WTC11 (cell line): ENCODE measurements at regions of chr10 and their contacts with region 1.

Region 1: GRCh38 chr10:119750391-119751230 is 24.8 kb downstream of the INPP5F start:
- DNase-seq: peak; percentile 71
- ATAC-seq: peak; percentile 96
- H3K4me3 Mint-ChIP-seq: no peak overlapping the region
- H3K27ac Mint-ChIP-seq: no peak overlapping the region
- H3K4me1 Mint-ChIP-seq: peaks cover 20% of the 10 kb centered on the region
- H3K27me3 Mint-ChIP-seq: no peaks in the 10 kb centered on the region
- CTCF ChIP-seq: peak; percentile 62

Region 2: GRCh38 chr10:119608316-119609155 is 142.1 kb before region 1 on chr10:
- CTCF ChIA-PET with region 1: interaction called, 16 read pairs
- POLR2A ChIA-PET with region 1: no interaction called
- DNase-seq: peak; percentile 65
- ATAC-seq: peak; percentile 96
- H3K4me3 Mint-ChIP-seq: no peak overlapping the region
- H3K27ac Mint-ChIP-seq: no peak overlapping the region
- H3K4me1 Mint-ChIP-seq: no peaks in the 10 kb centered on the region; the same call in 1 of the 2 replicates
- H3K27me3 Mint-ChIP-seq: peaks cover 4% of the 10 kb centered on the region; the same call in 1 of the 2 replicates
- CTCF ChIP-seq: no peak

Region 3: GRCh38 chr10:119734396-119735332 is 15.9 kb before region 1 on chr10:
- CTCF ChIA-PET with region 1: interaction called, 19 read pairs
- POLR2A ChIA-PET with region 1: interaction called, 3 read pairs
- DNase-seq: no peak
- ATAC-seq: peak; percentile 66
- H3K4me3 Mint-ChIP-seq: no peak overlapping the region
- H3K27ac Mint-ChIP-seq: peak overlapping the region; percentile 74; the same call in 1 of the 2 replicates
- H3K4me1 Mint-ChIP-seq: peaks cover 48% of the 10 kb centered on the region
- H3K27me3 Mint-ChIP-seq: no peaks in the 10 kb centered on the region
- CTCF ChIP-seq: no peak

Region 4: DNA sequence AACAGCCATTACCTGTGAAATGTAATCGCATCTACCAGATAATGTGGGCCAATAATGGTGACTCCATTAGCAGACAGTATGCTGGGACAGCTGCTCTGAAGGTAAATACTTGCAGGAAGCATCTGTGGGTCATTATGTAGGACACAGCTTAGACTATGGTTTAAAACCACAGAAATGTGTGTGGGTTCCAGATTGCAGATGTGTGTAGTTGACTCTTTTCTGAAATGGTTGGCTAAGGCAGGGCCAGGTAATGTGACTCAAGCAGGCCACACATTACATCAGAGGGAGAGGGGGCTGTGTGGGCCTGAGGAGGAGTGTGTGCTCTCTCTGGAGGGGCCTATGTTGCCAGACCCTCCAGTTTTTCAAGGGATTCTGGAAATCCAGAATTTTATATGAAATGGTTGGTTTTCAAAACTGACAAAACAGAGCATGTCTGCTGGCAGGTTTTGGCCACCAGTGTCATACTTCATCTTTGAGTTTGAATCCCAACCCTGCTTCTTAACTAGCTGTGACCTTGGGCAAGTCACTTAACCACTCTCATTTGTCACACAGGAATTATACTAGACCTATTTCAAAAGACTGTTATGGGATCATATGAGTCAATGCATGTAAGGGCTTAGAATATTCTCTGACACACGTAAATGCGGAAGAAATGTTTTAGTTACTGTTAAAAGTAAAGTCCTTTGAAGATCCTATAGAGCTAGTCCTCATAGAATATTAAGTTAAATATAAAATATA is 57.5 kb after region 1 on chr10:
- CTCF ChIA-PET with region 1: interaction called, 14 read pairs
- POLR2A ChIA-PET with region 1: no interaction called
- DNase-seq: no peak
- ATAC-seq: no peak
- H3K4me3 Mint-ChIP-seq: no peak overlapping the region
- H3K27ac Mint-ChIP-seq: no peak overlapping the region
- H3K4me1 Mint-ChIP-seq: no peaks in the 10 kb centered on the region
- H3K27me3 Mint-ChIP-seq: no peaks in the 10 kb centered on the region
- CTCF ChIP-seq: no peak

Region 5: DNA sequence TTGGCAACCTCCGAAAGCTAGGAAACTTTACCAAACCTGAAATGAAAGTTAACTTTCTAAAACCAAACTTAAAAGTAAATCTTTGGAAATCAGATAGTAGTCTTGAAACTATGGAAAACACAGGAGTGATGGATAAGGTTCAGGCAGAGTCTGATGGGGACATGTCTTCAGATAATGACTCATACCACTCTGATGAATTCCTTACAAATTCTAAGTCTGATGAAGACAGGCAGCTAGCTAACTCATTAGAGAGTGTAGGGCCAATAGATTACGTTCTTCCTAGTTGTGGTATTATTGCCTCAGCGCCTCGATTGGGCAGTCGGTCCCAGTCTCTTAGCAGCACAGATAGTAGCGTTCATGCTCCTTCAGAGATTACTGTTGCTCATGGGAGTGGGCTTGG is 76.2 kb after region 1 on chr10:
- CTCF ChIA-PET with region 1: interaction called, 22 read pairs
- POLR2A ChIA-PET with region 1: interaction called, 4 read pairs
- DNase-seq: no peak
- ATAC-seq: no peak
- H3K4me3 Mint-ChIP-seq: no peak overlapping the region
- H3K27ac Mint-ChIP-seq: peak overlapping the region; percentile 47; the same call in 1 of the 2 replicates
- H3K4me1 Mint-ChIP-seq: no peaks in the 10 kb centered on the region
- H3K27me3 Mint-ChIP-seq: no peaks in the 10 kb centered on the region
- CTCF ChIP-seq: no peak

Region 6: DNA sequence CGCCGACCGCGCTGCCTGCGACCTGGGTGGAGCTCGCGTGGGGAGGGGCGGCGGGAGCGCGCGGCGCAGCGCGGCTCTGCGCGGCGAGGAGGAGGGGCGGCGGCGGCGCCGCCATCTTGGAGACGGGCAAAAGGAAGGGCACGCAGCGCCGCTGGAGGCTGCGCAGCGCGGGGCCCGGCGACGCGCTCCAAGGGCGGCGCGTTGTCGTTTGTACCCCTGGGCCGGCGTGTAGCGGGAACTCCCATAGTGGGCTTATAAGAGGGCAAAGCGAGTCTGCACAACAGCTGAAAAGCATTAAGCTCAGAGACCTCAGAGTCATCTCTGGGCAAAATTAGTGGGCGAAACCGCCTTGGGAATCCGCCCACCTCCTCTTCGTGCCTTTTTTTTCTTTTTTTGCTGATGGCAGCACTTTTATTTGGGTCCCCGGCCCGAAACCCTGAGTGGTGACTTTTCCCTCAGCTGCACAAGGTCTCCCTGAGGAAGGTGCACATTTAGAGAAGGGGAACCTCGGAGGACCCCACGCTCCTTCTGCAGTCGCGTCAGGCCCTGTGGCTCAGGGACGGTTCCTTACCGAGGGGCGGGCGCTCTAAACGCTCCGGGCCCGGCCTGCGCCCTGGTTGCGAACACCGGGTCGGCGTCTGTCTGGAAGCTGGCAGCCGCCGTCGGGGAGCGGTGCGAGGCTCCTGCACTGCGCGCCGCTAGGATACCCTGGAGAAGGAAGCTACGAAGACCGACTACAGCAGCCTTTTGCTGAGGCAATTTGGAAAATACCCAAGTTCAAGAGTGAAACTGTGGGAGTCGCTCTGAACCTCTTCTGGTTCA is 122.5 kb after region 1 on chr10:
- CTCF ChIA-PET with region 1: interaction called, 10 read pairs
- POLR2A ChIA-PET with region 1: interaction called, 8 read pairs
- DNase-seq: peak; percentile 76
- ATAC-seq: peak; percentile 83
- H3K4me3 Mint-ChIP-seq: peak overlapping the region; percentile 83
- H3K27ac Mint-ChIP-seq: peak overlapping the region; percentile 74; the same call in 1 of the 2 replicates
- H3K4me1 Mint-ChIP-seq: peaks cover 35% of the 10 kb centered on the region
- H3K27me3 Mint-ChIP-seq: no peaks in the 10 kb centered on the region
- CTCF ChIP-seq: no peak